H1 (cell line): ENCODE measurements at regions of chr12 and their contacts with region 1.

Region 1: GRCh38 chr12:91355150-91356006 is 172.8 kb upstream of the DCN start:
- DNase-seq: peak; percentile 17 to 58
- H3K4me3 ChIP-seq: no peak overlapping the region
- H3K27ac ChIP-seq: no peak overlapping the region
- H3K4me1 ChIP-seq: no peaks in the 10 kb centered on the region
- H3K27me3 ChIP-seq: no peaks in the 10 kb centered on the region
- CTCF ChIP-seq: peak; percentile 73 to 88 (median 88)
- EP300 ChIP-seq: no peak
- POLR2A ChIP-seq: no peak
- RAD21 ChIP-seq: peak; percentile 94 to 96

Region 2: GRCh38 chr12:90978117-90978770 is 377.1 kb before region 1 on chr12:
- CTCF ChIA-PET with region 1: interaction called, 12 read pairs
- POLR2A ChIA-PET with region 1: no interaction called
- DNase-seq: no peak
- H3K4me3 ChIP-seq: no peak overlapping the region
- H3K27ac ChIP-seq: no peak overlapping the region
- H3K4me1 ChIP-seq: peaks cover 0 to 2% (median 0%) of the 10 kb centered on the region in 4 experiments; a peak in 1 of 7 replicates
- H3K27me3 ChIP-seq: peaks cover 4 to 21% (median 9%) of the 10 kb centered on the region in 4 experiments
- CTCF ChIP-seq: peak in 2 of 3 experiments; percentile 54 to 65; a peak in 3 of 4 replicates
- EP300 ChIP-seq: no peak
- POLR2A ChIP-seq: no peak
- RAD21 ChIP-seq: peak; percentile 84

Region 3: GRCh38 chr12:91178139-91178561 is 177.2 kb before region 1 on chr12:
- CTCF ChIA-PET with region 1: interaction called, 16 read pairs
- POLR2A ChIA-PET with region 1: no interaction called
- DNase-seq: no peak
- H3K4me3 ChIP-seq: no peak overlapping the region
- H3K27ac ChIP-seq: no peak overlapping the region
- H3K4me1 ChIP-seq: no peaks in the 10 kb centered on the region
- H3K27me3 ChIP-seq: no peaks in the 10 kb centered on the region
- CTCF ChIP-seq: peak in 2 of 3 experiments; percentile 27 to 44; a peak in 2 of 4 replicates
- EP300 ChIP-seq: no peak
- POLR2A ChIP-seq: no peak
- RAD21 ChIP-seq: peak; percentile 62 to 66

Region 4: DNA sequence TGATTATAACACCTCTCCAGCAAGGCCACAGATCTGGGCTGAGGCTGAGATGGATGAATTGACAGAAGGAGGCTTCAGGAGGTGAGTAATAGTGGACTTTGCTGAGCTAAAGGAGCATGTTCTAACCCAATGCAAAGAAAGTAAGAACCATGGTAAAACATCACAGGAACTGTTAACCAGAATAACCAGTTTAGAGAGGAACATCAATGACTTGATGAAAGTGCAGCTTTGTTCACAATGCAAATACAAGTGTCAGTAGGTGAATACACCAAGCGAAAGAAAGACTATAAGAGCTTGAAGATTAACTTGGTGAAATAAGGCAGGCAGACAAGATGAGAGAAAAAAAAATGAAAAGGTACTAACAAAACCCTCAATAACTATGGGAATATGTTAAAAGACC is 60.1 kb before region 1 on chr12:
- CTCF ChIA-PET with region 1: no interaction called
- POLR2A ChIA-PET with region 1: no interaction called
- DNase-seq: no peak
- H3K4me3 ChIP-seq: no peak overlapping the region
- H3K27ac ChIP-seq: no peak overlapping the region
- H3K4me1 ChIP-seq: no peaks in the 10 kb centered on the region
- H3K27me3 ChIP-seq: no peaks in the 10 kb centered on the region
- CTCF ChIP-seq: no peak
- EP300 ChIP-seq: no peak
- POLR2A ChIP-seq: no peak
- RAD21 ChIP-seq: no peak

Region 5: GRCh38 chr12:91326058-91327027 is 29.0 kb before region 1 on chr12:
- CTCF ChIA-PET with region 1: interaction called, 19 read pairs
- POLR2A ChIA-PET with region 1: no interaction called
- DNase-seq: peak in 1 of 2 experiments; percentile 68
- H3K4me3 ChIP-seq: no peak overlapping the region
- H3K27ac ChIP-seq: no peak overlapping the region
- H3K4me1 ChIP-seq: no peaks in the 10 kb centered on the region
- H3K27me3 ChIP-seq: no peaks in the 10 kb centered on the region
- CTCF ChIP-seq: peak in 2 of 3 experiments; percentile 55 to 61; a peak in 3 of 4 replicates
- EP300 ChIP-seq: no peak
- POLR2A ChIP-seq: no peak
- RAD21 ChIP-seq: peak; percentile 76 to 79

Region 6: DNA sequence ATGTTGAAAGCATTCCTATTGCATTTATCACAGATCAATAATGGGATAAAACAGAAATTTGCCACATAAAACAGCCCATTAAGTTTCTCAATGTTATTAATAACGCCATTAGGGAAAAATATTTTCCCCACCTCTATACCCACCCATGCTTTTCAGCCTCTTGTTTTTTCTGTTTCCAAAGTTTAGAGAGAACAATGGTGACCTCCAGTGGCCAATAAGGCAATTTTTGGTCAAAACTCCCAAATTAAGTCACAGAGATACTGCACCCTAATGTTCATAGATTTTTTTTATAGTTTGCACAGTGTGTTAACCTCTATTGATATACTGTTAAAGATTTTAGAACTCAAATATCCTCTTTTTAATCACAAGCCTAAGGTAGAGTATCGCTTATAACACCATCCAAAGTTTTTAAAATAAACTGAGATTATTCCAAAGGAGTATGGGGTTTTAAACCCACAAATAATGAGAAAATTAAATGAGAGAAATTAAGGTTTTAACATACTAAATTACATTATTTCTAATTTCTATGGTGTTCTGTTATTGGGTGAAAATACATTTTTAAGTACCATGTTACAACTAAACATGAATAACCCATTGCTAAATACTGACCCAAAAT is 12.0 kb after region 1 on chr12:
- CTCF ChIA-PET with region 1: interaction called, 10 read pairs
- POLR2A ChIA-PET with region 1: no interaction called
- DNase-seq: no peak
- H3K4me3 ChIP-seq: no peak overlapping the region
- H3K27ac ChIP-seq: no peak overlapping the region
- H3K4me1 ChIP-seq: peaks cover 2 to 7% (median 6%) of the 10 kb centered on the region in 4 experiments; a peak in 3 of 7 replicates
- H3K27me3 ChIP-seq: peaks cover 0 to 2% (median 0%) of the 10 kb centered on the region in 4 experiments; a peak in 1 of 7 replicates
- CTCF ChIP-seq: peak in 2 of 3 experiments; percentile 14 to 37; a peak in 2 of 4 replicates
- EP300 ChIP-seq: no peak
- POLR2A ChIP-seq: no peak
- RAD21 ChIP-seq: peak; percentile 49 to 55